ENCODE measurements at regions of chr1 and their contacts with region 1.

Region 1: GRCh38 chr1:23344111-23344986 is at the start of gene HNRNPR:
- DNase-seq: peak; percentile 100
- ATAC-seq: peak; percentile 99
- H3K4me3 Mint-ChIP-seq: peak within 1 kb of the TSS; percentile 86
- H3K27ac Mint-ChIP-seq: peak within 1 kb of the TSS; percentile 94
- H3K4me1 Mint-ChIP-seq: peaks cover 34% of the 10 kb centered on the region
- H3K27me3 Mint-ChIP-seq: no peaks in the 10 kb centered on the region
- total RNA-seq, gene HNRNPR: 217 to 231 TPM

Region 2: GRCh38 chr1:23362218-23362713 is 17.9 kb after region 1 on chr1:
- CTCF ChIA-PET with region 1: interaction called, 19 read pairs
- POLR2A ChIA-PET with region 1: interaction called, 38 read pairs
- DNase-seq: no peak
- ATAC-seq: no peak
- H3K4me3 Mint-ChIP-seq: no peak overlapping the region
- H3K27ac Mint-ChIP-seq: no peak overlapping the region
- H3K4me1 Mint-ChIP-seq: peaks cover 15% of the 10 kb centered on the region
- H3K27me3 Mint-ChIP-seq: no peaks in the 10 kb centered on the region

Region 3: GRCh38 chr1:23367791-23368561 is 23.6 kb after region 1 on chr1:
- CTCF ChIA-PET with region 1: interaction called, 19 read pairs
- POLR2A ChIA-PET with region 1: interaction called, 38 read pairs
- DNase-seq: peak; percentile 99
- ATAC-seq: peak; percentile 94
- H3K4me3 Mint-ChIP-seq: peak overlapping the region; percentile 92
- H3K27ac Mint-ChIP-seq: peak overlapping the region; percentile 97
- H3K4me1 Mint-ChIP-seq: peaks cover 36% of the 10 kb centered on the region
- H3K27me3 Mint-ChIP-seq: no peaks in the 10 kb centered on the region

Region 4: GRCh38 chr1:23422241-23423030 is 78.1 kb after region 1 on chr1:
- CTCF ChIA-PET with region 1: interaction called, 3 read pairs
- POLR2A ChIA-PET with region 1: interaction called, 12 read pairs
- DNase-seq: peak; percentile 83
- ATAC-seq: peak; percentile 84
- H3K4me3 Mint-ChIP-seq: peak overlapping the region; percentile 78
- H3K27ac Mint-ChIP-seq: peak overlapping the region; percentile 74
- H3K4me1 Mint-ChIP-seq: peaks cover 39% of the 10 kb centered on the region
- H3K27me3 Mint-ChIP-seq: peaks cover 25% of the 10 kb centered on the region

Measured in activated CD8-positive, alpha-beta T cell treated with anti-CD3 and anti-CD28 coated beads, Interleukin-2, amount 10 ng/mL, durations not matched to agents 7 days and 5 days (primary cell).